ENCODE measurements at regions of chr5 and their contacts with region 1.

Region 1: DNA sequence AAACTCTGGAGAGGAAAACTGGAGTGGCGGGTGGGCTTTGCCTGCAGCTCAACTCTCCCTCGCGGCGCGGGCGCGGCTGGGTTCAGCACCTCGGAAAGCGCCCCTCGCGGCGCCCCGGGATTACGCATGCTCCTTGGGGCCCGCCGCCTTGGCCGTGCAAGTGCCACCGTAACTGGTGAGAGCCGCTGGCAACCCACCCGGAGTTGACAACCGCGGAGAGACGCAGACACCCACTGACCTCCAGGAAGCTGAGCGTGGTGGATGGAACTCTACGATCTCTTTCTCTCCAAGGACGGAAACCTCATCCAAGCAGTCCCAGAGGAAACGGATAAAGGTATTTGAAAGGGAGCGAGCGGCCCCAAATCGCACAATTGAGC is 194 bp upstream of the RXFP3 start:
- DNase-seq: no peak
- H3K4me3 ChIP-seq: no peak overlapping the region
- H3K4me3 Mint-ChIP-seq: no peak overlapping the region
- H3K27ac Mint-ChIP-seq: no peak overlapping the region
- H3K4me1 ChIP-seq: no peaks in the 10 kb centered on the region
- H3K4me1 Mint-ChIP-seq: no peaks in the 10 kb centered on the region
- H3K27me3 ChIP-seq: no peaks in the 10 kb centered on the region
- H3K27me3 Mint-ChIP-seq: peaks cover 17% of the 10 kb centered on the region
- CTCF ChIP-seq: no peak

Region 2: GRCh38 chr5:33440482-33441240 is 495.3 kb before region 1 on chr5 and contains the start of gene TARS1:
- CTCF ChIA-PET with region 1: interaction called, 28 read pairs
- POLR2A ChIA-PET with region 1: no interaction called
- intact Hi-C with region 1: loop called (anchors 1 kb)
- DNase-seq: peak; percentile 98 to 99
- H3K4me3 ChIP-seq: peak within 1 kb of the TSS; percentile 79
- H3K4me3 Mint-ChIP-seq: no peak within 1 kb of the TSS
- H3K27ac Mint-ChIP-seq: no peak within 1 kb of the TSS
- H3K4me1 ChIP-seq: peaks cover 16% of the 10 kb centered on the region
- H3K4me1 Mint-ChIP-seq: peaks cover 11% of the 10 kb centered on the region
- H3K27me3 ChIP-seq: no peaks in the 10 kb centered on the region
- H3K27me3 Mint-ChIP-seq: no peaks in the 10 kb centered on the region
- CTCF ChIP-seq: no peak
- total RNA-seq, gene TARS1: 278 and 288 TPM in 2 replicates

Region 3: GRCh38 chr5:33470544-33470943 is 465.4 kb before region 1 on chr5:
- CTCF ChIA-PET with region 1: interaction called, 7 read pairs
- POLR2A ChIA-PET with region 1: no interaction called
- intact Hi-C with region 1: loop called (anchors 1 kb)
- DNase-seq: peak in 1 of 2 experiments; percentile 39
- H3K4me3 ChIP-seq: no peak overlapping the region
- H3K4me3 Mint-ChIP-seq: no peak overlapping the region
- H3K27ac Mint-ChIP-seq: no peak overlapping the region
- H3K4me1 ChIP-seq: no peaks in the 10 kb centered on the region
- H3K4me1 Mint-ChIP-seq: no peaks in the 10 kb centered on the region
- H3K27me3 ChIP-seq: no peaks in the 10 kb centered on the region
- H3K27me3 Mint-ChIP-seq: no peaks in the 10 kb centered on the region
- CTCF ChIP-seq: peak in 1 of 2 experiments; percentile 50

Region 4: DNA sequence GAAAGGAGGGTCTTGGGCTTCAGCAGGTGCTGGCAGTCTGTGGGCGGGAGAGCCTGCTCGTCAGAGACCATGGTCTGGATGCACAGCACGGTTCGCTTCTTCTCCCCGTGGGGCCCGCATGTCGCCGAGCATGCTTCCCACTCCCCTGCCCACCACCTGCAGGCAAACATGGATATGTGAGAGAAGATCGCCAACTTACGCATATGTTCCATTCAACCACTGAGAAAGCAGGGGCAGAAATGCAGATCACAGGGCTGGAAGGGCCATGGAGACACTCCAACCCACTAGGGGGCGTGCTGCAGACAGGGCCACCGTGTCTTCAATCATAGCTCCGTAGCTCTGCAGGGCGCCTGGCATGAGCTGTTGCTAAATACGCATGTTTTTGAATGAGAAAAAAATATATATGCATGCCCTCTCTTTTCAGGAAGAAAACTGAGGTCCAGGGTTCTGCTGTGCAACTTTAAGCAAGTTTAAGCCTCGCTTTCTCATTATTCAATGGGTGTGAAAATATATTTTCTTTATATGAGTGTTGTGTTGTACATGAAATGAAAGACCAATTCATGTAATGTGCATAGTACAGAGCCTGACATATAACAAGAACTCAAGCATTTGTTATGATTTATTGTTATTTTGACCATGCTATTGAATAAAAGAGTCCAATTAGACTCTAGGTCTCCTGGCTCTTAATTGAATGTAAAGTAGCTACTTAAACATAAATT is 347.2 kb before region 1 on chr5:
- CTCF ChIA-PET with region 1: interaction called, 21 read pairs
- POLR2A ChIA-PET with region 1: no interaction called
- intact Hi-C with region 1: loop called (anchors 1 kb)
- DNase-seq: peak; percentile 49 to 59
- H3K4me3 ChIP-seq: no peak overlapping the region
- H3K4me3 Mint-ChIP-seq: no peak overlapping the region
- H3K27ac Mint-ChIP-seq: no peak overlapping the region
- H3K4me1 ChIP-seq: no peaks in the 10 kb centered on the region
- H3K4me1 Mint-ChIP-seq: no peaks in the 10 kb centered on the region
- H3K27me3 ChIP-seq: no peaks in the 10 kb centered on the region; the same call in 1 of the 2 replicates
- H3K27me3 Mint-ChIP-seq: peaks cover 13% of the 10 kb centered on the region
- CTCF ChIP-seq: peak; percentile 65 to 74

Region 5: GRCh38 chr5:33736510-33736909 is 199.5 kb before region 1 on chr5:
- CTCF ChIA-PET with region 1: no interaction called
- POLR2A ChIA-PET with region 1: no interaction called
- intact Hi-C with region 1: loop called (anchors 10 kb)
- DNase-seq: no peak
- H3K4me3 ChIP-seq: no peak overlapping the region
- H3K4me3 Mint-ChIP-seq: no peak overlapping the region
- H3K27ac Mint-ChIP-seq: no peak overlapping the region
- H3K4me1 ChIP-seq: peaks cover 10% of the 10 kb centered on the region; the same call in 1 of the 2 replicates
- H3K4me1 Mint-ChIP-seq: no peaks in the 10 kb centered on the region
- H3K27me3 ChIP-seq: no peaks in the 10 kb centered on the region
- H3K27me3 Mint-ChIP-seq: no peaks in the 10 kb centered on the region
- CTCF ChIP-seq: no peak

Region 6: GRCh38 chr5:33806738-33807442 is 129.1 kb before region 1 on chr5:
- CTCF ChIA-PET with region 1: no interaction called
- POLR2A ChIA-PET with region 1: no interaction called
- intact Hi-C with region 1: loop called (anchors 1 kb)
- DNase-seq: peak in 1 of 2 experiments; percentile 27
- H3K4me3 ChIP-seq: no peak overlapping the region
- H3K4me3 Mint-ChIP-seq: peak overlapping the region; percentile 10
- H3K27ac Mint-ChIP-seq: no peak overlapping the region
- H3K4me1 ChIP-seq: peaks cover 15% of the 10 kb centered on the region
- H3K4me1 Mint-ChIP-seq: peaks cover 14% of the 10 kb centered on the region
- H3K27me3 ChIP-seq: no peaks in the 10 kb centered on the region
- H3K27me3 Mint-ChIP-seq: no peaks in the 10 kb centered on the region
- CTCF ChIP-seq: peak in 1 of 2 experiments; percentile 45

Region 7: DNA sequence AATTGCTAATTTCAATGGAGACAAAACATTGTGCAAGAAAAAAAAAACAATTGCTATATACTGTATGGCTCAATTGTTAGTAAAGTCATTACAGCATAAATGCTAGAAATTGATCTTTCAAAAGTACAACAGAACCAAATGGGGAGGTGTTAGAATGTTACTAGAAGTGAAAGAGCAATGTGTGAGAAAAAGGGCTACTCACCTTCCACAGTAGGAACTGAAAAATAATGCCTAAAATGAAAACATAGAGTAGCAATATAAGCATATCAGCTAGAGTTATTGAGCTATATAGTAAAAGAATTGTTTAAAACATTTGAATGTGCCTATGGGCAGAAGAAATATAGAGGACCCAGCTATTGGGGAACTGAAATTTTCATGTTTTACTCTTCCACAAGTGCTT is 10.7 kb before region 1 on chr5:
- CTCF ChIA-PET with region 1: no interaction called
- POLR2A ChIA-PET with region 1: no interaction called
- intact Hi-C with region 1: no loop called
- DNase-seq: no peak
- H3K4me3 ChIP-seq: no peak overlapping the region
- H3K4me3 Mint-ChIP-seq: no peak overlapping the region
- H3K27ac Mint-ChIP-seq: no peak overlapping the region
- H3K4me1 ChIP-seq: no peaks in the 10 kb centered on the region
- H3K4me1 Mint-ChIP-seq: no peaks in the 10 kb centered on the region
- H3K27me3 ChIP-seq: no peaks in the 10 kb centered on the region
- H3K27me3 Mint-ChIP-seq: no peaks in the 10 kb centered on the region
- CTCF ChIP-seq: no peak

Region 8: DNA sequence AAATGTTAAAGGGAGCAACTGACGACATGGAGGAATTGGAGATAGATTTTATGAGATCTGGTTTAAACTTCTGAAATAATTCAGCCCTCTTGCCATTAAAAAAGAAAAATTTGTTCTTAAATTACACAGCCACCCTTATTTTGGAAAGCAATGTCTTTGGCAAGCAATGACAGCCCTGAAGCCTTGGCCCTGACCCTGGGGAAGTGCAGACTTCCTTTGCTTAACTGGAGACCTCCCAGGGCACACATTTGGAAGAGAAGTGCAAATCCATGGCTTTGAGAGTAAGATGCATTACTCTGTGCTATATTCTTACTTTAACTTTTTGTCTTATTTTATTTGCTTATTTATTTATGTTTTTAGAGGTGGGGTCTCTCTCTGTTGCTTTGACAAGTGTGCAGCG is 22.2 kb after region 1 on chr5:
- CTCF ChIA-PET with region 1: no interaction called
- POLR2A ChIA-PET with region 1: no interaction called
- intact Hi-C with region 1: no loop called
- DNase-seq: no peak
- H3K4me3 ChIP-seq: no peak overlapping the region
- H3K4me3 Mint-ChIP-seq: no peak overlapping the region
- H3K27ac Mint-ChIP-seq: no peak overlapping the region
- H3K4me1 ChIP-seq: no peaks in the 10 kb centered on the region
- H3K4me1 Mint-ChIP-seq: no peaks in the 10 kb centered on the region
- H3K27me3 ChIP-seq: no peaks in the 10 kb centered on the region
- H3K27me3 Mint-ChIP-seq: peaks cover 15% of the 10 kb centered on the region
- CTCF ChIP-seq: no peak

Region 9: DNA sequence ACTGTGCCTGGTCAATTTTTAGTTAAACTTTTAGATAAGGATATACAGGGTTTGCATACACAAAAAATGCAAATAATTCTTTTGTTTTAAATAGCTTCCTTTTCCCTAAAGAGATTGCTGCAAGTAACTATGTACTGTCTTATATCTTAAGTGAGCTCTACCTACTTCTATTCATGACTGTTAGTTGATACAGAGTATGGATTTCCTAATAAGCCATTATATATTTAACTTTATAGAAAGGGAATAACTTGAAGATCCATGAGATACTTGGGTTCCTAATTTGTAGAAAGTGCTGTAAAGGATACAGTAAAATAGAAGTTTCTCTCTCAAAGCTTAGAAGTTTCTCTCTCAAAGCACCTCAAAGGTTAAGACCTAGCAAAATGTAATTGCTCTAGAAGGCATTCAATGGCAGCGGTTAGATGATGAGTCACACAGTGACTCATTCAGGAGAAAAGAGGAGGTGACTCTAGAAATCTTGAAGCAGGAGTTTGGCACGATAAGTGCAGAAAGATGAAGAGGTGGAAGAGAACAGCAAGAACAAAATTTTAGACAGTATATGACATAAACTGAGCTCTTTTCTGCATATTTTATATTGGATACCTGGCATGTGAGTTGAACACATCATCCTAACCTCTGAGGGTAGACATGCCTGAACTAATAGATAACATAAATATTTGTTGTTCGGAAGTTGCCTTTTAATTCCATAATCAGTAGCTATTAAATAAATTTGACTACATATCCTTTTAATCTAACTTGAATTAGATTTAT is 987.9 kb after region 1 on chr5:
- CTCF ChIA-PET with region 1: no interaction called
- POLR2A ChIA-PET with region 1: no interaction called
- intact Hi-C with region 1: no loop called
- DNase-seq: peak in 1 of 2 experiments; percentile 20
- H3K4me3 ChIP-seq: no peak overlapping the region
- H3K4me3 Mint-ChIP-seq: peak overlapping the region; percentile 20
- H3K27ac Mint-ChIP-seq: peak overlapping the region; percentile 36
- H3K4me1 ChIP-seq: peaks cover 19% of the 10 kb centered on the region; the same call in 1 of the 2 replicates
- H3K4me1 Mint-ChIP-seq: peaks cover 8% of the 10 kb centered on the region
- H3K27me3 ChIP-seq: no peaks in the 10 kb centered on the region
- H3K27me3 Mint-ChIP-seq: no peaks in the 10 kb centered on the region
- CTCF ChIP-seq: no peak